ENCODE measurements at regions of chr19 and their contacts with region 1.

Region 1: GRCh38 chr19:44782729-44783128 is 5.0 kb downstream of the CBLC start:
- DNase-seq: no peak
- H3K4me3 ChIP-seq: no peak overlapping the region
- CTCF ChIP-seq: no peak
- POLR2A ChIP-seq: no peak

Region 2: DNA sequence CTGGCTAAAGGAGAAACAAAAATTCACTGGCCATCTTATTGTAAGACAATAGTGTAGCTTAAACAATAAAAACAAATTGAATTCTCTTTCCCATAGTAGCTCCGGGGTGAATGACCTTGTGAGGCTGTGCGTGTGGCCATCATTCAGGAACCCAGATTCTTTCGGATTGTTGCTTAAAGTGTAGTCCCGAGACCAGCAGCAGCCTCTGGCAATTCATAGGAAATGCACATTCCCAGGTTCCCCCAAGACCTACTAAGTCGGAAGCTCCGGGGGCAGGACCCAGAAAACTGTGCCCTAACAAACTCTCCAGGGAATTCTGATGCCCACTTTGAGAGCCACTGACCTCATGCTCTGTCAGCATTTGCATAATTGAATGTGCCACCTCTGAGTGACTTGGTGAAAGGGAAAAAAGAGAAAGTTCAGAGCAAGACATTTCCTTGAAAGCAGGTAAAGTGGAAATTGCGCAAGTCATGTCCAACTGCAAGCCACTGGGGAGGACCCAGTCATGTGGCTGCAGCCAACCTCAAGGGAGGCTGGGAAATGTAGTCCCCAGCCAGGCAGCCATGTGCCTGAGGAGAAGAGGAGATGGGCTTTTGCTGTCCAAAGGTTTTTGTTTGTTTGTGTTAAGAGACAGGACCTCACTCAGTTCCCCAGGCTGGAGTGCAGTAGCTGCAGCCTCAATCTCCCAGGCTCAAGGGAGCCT is 1763.6 kb after region 1 on chr19:
- intact Hi-C with region 1: loop called (anchors 5 kb)
- DNase-seq: peak in 1 of 2 donors; percentile 43
- H3K4me3 ChIP-seq: no peak overlapping the region
- CTCF ChIP-seq: no peak
- POLR2A ChIP-seq: no peak